GM12878 (cell line): ENCODE measurements at regions of chr4 and their contacts with region 1.

Region 1: GRCh38 chr4:152500800-152501434 is 35.0 kb downstream of the FBXW7 start:
- DNase-seq: peak; percentile 74
- ATAC-seq: peak; percentile 77
- H3K4me3 ChIP-seq: peak overlapping the region; percentile 21; the same call in 1 of the 2 replicates
- H3K27ac ChIP-seq: peak overlapping the region; percentile 57
- H3K4me1 ChIP-seq: peaks cover 18% of the 10 kb centered on the region
- H3K27me3 ChIP-seq: no peaks in the 10 kb centered on the region
- CTCF ChIP-seq: peak; percentile 61 to 85 (median 83)
- EP300 ChIP-seq: no peak
- POLR2A ChIP-seq: no peak
- RAD21 ChIP-seq: peak; percentile 87

Region 2: GRCh38 chr4:152331042-152331441 is 169.9 kb before region 1 on chr4:
- CTCF ChIA-PET with region 1: no interaction called
- POLR2A ChIA-PET with region 1: no interaction called
- RAD21 ChIA-PET with region 1: no interaction called
- SMC1A ChIA-PET with region 1: no interaction called
- in situ Hi-C with region 1: no loop called
- intact Hi-C with region 1: no loop called
- DNase-seq: no peak
- ATAC-seq: no peak
- H3K4me3 ChIP-seq: no peak overlapping the region
- H3K27ac ChIP-seq: no peak overlapping the region
- H3K4me1 ChIP-seq: no peaks in the 10 kb centered on the region
- H3K27me3 ChIP-seq: no peaks in the 10 kb centered on the region
- CTCF ChIP-seq: no peak
- EP300 ChIP-seq: no peak
- POLR2A ChIP-seq: no peak
- RAD21 ChIP-seq: no peak

Region 3: GRCh38 chr4:152448038-152448707 is 52.7 kb before region 1 on chr4:
- CTCF ChIA-PET with region 1: interaction called, 11 read pairs
- POLR2A ChIA-PET with region 1: interaction called, 3 read pairs
- RAD21 ChIA-PET with region 1: interaction called, 18 read pairs
- SMC1A ChIA-PET with region 1: interaction called, 12 read pairs
- in situ Hi-C with region 1: no loop called
- intact Hi-C with region 1: no loop called
- DNase-seq: no peak
- ATAC-seq: no peak
- H3K4me3 ChIP-seq: no peak overlapping the region
- H3K27ac ChIP-seq: no peak overlapping the region
- H3K4me1 ChIP-seq: no peaks in the 10 kb centered on the region
- H3K27me3 ChIP-seq: no peaks in the 10 kb centered on the region
- CTCF ChIP-seq: no peak
- EP300 ChIP-seq: no peak
- POLR2A ChIP-seq: no peak
- RAD21 ChIP-seq: no peak

Region 4: GRCh38 chr4:152479428-152480026 is 21.4 kb before region 1 on chr4:
- CTCF ChIA-PET with region 1: interaction called, 7 read pairs
- POLR2A ChIA-PET with region 1: no interaction called
- RAD21 ChIA-PET with region 1: interaction called, 10 read pairs
- SMC1A ChIA-PET with region 1: interaction called, 12 read pairs
- in situ Hi-C with region 1: no loop called
- intact Hi-C with region 1: no loop called
- DNase-seq: no peak
- ATAC-seq: no peak
- H3K4me3 ChIP-seq: no peak overlapping the region
- H3K27ac ChIP-seq: no peak overlapping the region
- H3K4me1 ChIP-seq: no peaks in the 10 kb centered on the region
- H3K27me3 ChIP-seq: no peaks in the 10 kb centered on the region
- CTCF ChIP-seq: no peak
- EP300 ChIP-seq: no peak
- POLR2A ChIP-seq: no peak
- RAD21 ChIP-seq: no peak

Region 5: DNA sequence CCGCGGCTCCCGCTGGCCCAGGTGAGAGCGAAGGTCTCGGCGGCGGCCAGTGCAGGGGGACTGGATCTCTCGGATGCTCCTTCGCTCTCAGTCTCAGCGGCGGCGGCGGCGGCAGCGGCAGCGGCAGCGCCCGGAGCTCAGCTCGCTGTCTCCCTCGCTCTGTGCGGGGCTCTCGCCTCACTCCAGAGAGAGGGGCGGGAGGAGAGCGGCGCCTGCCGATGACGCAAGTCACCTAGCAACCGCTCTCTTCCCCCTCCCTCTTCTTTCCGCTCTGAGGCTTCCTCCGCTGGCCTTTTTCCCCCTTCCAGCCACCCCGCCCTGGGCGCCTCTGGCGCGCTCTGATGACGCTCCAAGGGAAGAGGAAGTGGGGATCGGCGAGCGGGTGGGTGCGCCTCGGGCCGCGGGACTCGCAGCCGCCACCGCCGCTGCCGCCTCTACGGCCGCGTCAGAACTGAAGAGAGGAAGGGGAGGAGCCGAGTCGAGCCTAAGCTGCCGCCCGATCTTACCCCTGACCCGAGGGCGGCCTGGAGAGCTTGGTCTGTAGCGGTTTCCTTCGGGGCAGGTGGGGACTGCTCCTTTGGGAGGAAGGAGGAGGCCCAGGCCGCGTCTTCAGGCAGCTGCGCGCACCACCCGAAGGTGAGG is 35.1 kb after region 1 on chr4 and contains the start of gene FBXW7:
- CTCF ChIA-PET with region 1: interaction called, 146 read pairs
- POLR2A ChIA-PET with region 1: interaction called, 93 read pairs
- RAD21 ChIA-PET with region 1: interaction called, 224 read pairs
- SMC1A ChIA-PET with region 1: interaction called, 197 read pairs
- in situ Hi-C with region 1: no loop called
- intact Hi-C with region 1: loop called (anchors 2 kb)
- DNase-seq: peak; percentile 98
- ATAC-seq: peak; percentile 84
- H3K4me3 ChIP-seq: peak within 1 kb of the TSS; percentile 92
- H3K27ac ChIP-seq: peak within 1 kb of the TSS; percentile 96
- H3K4me1 ChIP-seq: peaks cover 21% of the 10 kb centered on the region
- H3K27me3 ChIP-seq: no peaks in the 10 kb centered on the region
- CTCF ChIP-seq: no peak
- EP300 ChIP-seq: peak in 1 of 2 experiments; percentile 75; a peak in 3 of 4 replicates
- POLR2A ChIP-seq: peak; percentile 90
- RAD21 ChIP-seq: no peak
- polyA plus RNA-seq, gene FBXW7: 40.2 to 42.5 TPM

Region 6: GRCh38 chr4:152591396-152591795 is 90.5 kb after region 1 on chr4:
- CTCF ChIA-PET with region 1: interaction called, 4 read pairs
- POLR2A ChIA-PET with region 1: no interaction called
- RAD21 ChIA-PET with region 1: interaction called, 12 read pairs
- SMC1A ChIA-PET with region 1: interaction called, 32 read pairs
- in situ Hi-C with region 1: no loop called
- intact Hi-C with region 1: no loop called
- DNase-seq: no peak
- ATAC-seq: peak; percentile 61
- H3K4me3 ChIP-seq: no peak overlapping the region
- H3K27ac ChIP-seq: no peak overlapping the region
- H3K4me1 ChIP-seq: peaks cover 18% of the 10 kb centered on the region
- H3K27me3 ChIP-seq: no peaks in the 10 kb centered on the region
- CTCF ChIP-seq: no peak
- EP300 ChIP-seq: no peak
- POLR2A ChIP-seq: no peak
- RAD21 ChIP-seq: no peak

Region 7: GRCh38 chr4:152640058-152640833 is 139.3 kb after region 1 on chr4:
- CTCF ChIA-PET with region 1: interaction called, 465 read pairs
- POLR2A ChIA-PET with region 1: interaction called, 54 read pairs
- RAD21 ChIA-PET with region 1: interaction called, 513 read pairs
- SMC1A ChIA-PET with region 1: interaction called, 555 read pairs
- in situ Hi-C with region 1: loop called (anchors 5 kb)
- intact Hi-C with region 1: loop called (anchors 1 kb)
- DNase-seq: no peak
- ATAC-seq: 0 out of 3 replicates have a peak, but pooled peaks have one; percentile 3
- H3K4me3 ChIP-seq: no peak overlapping the region
- H3K27ac ChIP-seq: no peak overlapping the region; the same call in 1 of the 2 replicates
- H3K4me1 ChIP-seq: peaks cover 65% of the 10 kb centered on the region
- H3K27me3 ChIP-seq: no peaks in the 10 kb centered on the region
- CTCF ChIP-seq: peak; percentile 34 to 63 (median 49); a peak in 4 of 6 replicates
- EP300 ChIP-seq: no peak
- POLR2A ChIP-seq: no peak
- RAD21 ChIP-seq: peak; percentile 75

Region 8: DNA sequence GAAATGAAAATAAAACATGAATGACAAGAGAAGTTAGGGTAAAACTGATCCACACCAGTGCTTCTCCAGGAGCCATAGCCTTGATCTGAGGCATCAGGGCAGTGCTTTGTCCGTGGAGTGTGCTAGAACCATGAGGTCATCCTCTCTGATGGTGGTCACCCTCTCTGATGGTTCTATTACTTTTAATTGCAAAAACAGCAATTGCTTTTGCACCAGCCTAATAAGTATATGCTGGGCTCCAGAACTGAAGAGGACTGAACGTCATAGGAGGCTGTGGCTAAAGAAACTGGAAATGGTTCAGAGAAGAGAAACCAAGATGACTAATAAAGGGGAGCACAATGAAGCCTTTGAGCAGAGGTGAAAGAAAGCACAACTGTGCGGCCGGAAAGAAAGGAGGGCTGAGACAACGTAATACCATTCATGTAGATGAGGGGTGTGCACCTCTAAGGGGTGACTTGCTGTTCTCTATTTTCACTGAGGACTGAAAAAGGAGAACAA is 195.9 kb after region 1 on chr4:
- CTCF ChIA-PET with region 1: interaction called, 27 read pairs
- POLR2A ChIA-PET with region 1: no interaction called
- RAD21 ChIA-PET with region 1: interaction called, 25 read pairs
- SMC1A ChIA-PET with region 1: interaction called, 40 read pairs
- in situ Hi-C with region 1: no loop called
- intact Hi-C with region 1: no loop called
- DNase-seq: peak; percentile 98
- ATAC-seq: peak; percentile 97
- H3K4me3 ChIP-seq: peak overlapping the region; percentile 42; the same call in 1 of the 2 replicates
- H3K27ac ChIP-seq: peak overlapping the region; percentile 71
- H3K4me1 ChIP-seq: peaks cover 20% of the 10 kb centered on the region
- H3K27me3 ChIP-seq: no peaks in the 10 kb centered on the region
- CTCF ChIP-seq: no peak
- EP300 ChIP-seq: peak; percentile 85 to 93; a peak in 3 of 4 replicates
- POLR2A ChIP-seq: no peak
- RAD21 ChIP-seq: no peak

Region 9: GRCh38 chr4:153233761-153234371 is 732.9 kb after region 1 on chr4:
- CTCF ChIA-PET with region 1: no interaction called
- POLR2A ChIA-PET with region 1: no interaction called
- RAD21 ChIA-PET with region 1: no interaction called
- SMC1A ChIA-PET with region 1: no interaction called
- in situ Hi-C with region 1: no loop called
- intact Hi-C with region 1: no loop called
- DNase-seq: no peak
- ATAC-seq: no peak
- H3K4me3 ChIP-seq: no peak overlapping the region
- H3K27ac ChIP-seq: no peak overlapping the region
- H3K4me1 ChIP-seq: no peaks in the 10 kb centered on the region
- H3K27me3 ChIP-seq: peaks cover 0 to 2% of the 10 kb centered on the region in 2 experiments; a peak in 2 of 4 replicates
- CTCF ChIP-seq: no peak
- EP300 ChIP-seq: no peak
- POLR2A ChIP-seq: no peak
- RAD21 ChIP-seq: no peak